ENCODE measurements at regions of chr13 and their contacts with region 1.

Region 1: GRCh38 chr13:62357887-62358645 is 942.4 kb upstream of the PCDH20 start:
- DNase-seq: peak; percentile 90

Region 2: GRCh38 chr13:62320129-62321108 is 37.6 kb before region 1 on chr13:
- CTCF ChIA-PET with region 1: interaction called, 21 read pairs
- POLR2A ChIA-PET with region 1: no interaction called
- DNase-seq: peak; percentile 73